Vagina (tissue), 2 donors: ENCODE measurements at regions of chr1 and their contacts with region 1.

Region 1: DNA sequence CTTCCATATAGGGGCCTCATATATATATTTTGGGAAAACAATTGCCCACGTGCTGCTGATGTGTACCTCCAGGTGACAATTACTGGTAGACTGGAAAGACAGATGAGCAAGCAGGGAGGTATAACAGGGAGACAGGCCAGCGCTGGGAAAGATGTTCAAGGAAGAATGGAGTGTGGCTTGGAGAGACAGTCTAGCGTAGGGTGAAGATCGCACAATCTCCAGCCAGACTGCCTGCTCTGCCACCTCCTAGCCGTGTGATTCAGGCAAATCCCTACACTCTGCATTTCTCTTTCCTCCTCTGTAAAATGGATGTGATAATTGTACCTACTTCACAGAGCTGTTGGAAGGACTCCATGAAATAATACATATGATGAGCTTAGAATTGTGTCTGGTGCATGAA is 66.1 kb downstream of the TMCO4 start:
- DNase-seq: no peak
- H3K4me3 ChIP-seq: no peak overlapping the region
- H3K27ac ChIP-seq: no peak overlapping the region
- H3K4me1 ChIP-seq: peaks cover 12% of the 10 kb centered on the region
- H3K27me3 ChIP-seq: no peaks in the 10 kb centered on the region
- CTCF ChIP-seq: no peak
- POLR2A ChIP-seq: no peak

Region 2: DNA sequence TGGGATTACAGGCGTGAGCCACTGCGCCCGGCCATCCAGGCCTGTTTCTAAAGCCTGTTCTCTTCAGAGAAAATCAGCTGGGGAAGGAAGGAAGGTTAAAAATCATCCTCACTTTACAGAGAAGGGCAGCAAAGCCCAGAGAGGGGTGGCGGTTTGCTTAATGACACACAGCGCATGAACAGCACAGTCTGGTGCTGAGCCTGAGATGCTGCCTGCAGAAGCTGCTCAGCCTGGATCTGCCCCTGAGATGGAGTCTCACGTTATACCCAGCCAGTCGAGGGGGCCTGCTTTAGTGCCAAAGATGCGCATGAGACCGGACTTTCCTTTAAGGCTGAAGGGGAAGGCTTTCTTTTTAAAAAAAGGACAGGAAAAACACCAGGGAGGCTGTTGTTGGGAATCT is 47.6 kb before region 1 on chr1:
- intact Hi-C with region 1: loop called (anchors 2 kb)
- DNase-seq: no peak
- H3K4me3 ChIP-seq: no peak overlapping the region
- H3K27ac ChIP-seq: no peak overlapping the region
- H3K4me1 ChIP-seq: no peaks in the 10 kb centered on the region
- H3K27me3 ChIP-seq: no peaks in the 10 kb centered on the region
- CTCF ChIP-seq: no peak
- POLR2A ChIP-seq: no peak